Activated naive CD4-positive, alpha-beta T cell treated with anti-CD3 and anti-CD28 coated beads for 36 hours (primary cell): ENCODE measurements at regions of chr20 and their contacts with region 1.

Region 1: GRCh38 chr20:44885392-44886265 is at the start of gene YWHAB:
- DNase-seq: peak; percentile 99
- H3K4me3 Mint-ChIP-seq: peak within 1 kb of the TSS; percentile 95
- H3K27ac Mint-ChIP-seq: peak within 1 kb of the TSS; percentile 96
- H3K4me1 Mint-ChIP-seq: peaks cover 59% of the 10 kb centered on the region
- H3K27me3 Mint-ChIP-seq: no peaks in the 10 kb centered on the region
- total RNA-seq, gene YWHAB: 245 to 260 TPM

Region 2: GRCh38 chr20:44210422-44211176 is 675.0 kb before region 1 on chr20 and contains the start of gene OSER1:
- CTCF ChIA-PET with region 1: no interaction called
- intact Hi-C with region 1: loop called (anchors 5 kb)
- DNase-seq: peak; percentile 99
- H3K4me3 Mint-ChIP-seq: peak within 1 kb of the TSS; percentile 94
- H3K27ac Mint-ChIP-seq: peak within 1 kb of the TSS; percentile 92
- H3K4me1 Mint-ChIP-seq: peaks cover 61% of the 10 kb centered on the region
- H3K27me3 Mint-ChIP-seq: no peaks in the 10 kb centered on the region
- total RNA-seq, gene OSER1: 27.7 to 28.4 TPM

Region 3: DNA sequence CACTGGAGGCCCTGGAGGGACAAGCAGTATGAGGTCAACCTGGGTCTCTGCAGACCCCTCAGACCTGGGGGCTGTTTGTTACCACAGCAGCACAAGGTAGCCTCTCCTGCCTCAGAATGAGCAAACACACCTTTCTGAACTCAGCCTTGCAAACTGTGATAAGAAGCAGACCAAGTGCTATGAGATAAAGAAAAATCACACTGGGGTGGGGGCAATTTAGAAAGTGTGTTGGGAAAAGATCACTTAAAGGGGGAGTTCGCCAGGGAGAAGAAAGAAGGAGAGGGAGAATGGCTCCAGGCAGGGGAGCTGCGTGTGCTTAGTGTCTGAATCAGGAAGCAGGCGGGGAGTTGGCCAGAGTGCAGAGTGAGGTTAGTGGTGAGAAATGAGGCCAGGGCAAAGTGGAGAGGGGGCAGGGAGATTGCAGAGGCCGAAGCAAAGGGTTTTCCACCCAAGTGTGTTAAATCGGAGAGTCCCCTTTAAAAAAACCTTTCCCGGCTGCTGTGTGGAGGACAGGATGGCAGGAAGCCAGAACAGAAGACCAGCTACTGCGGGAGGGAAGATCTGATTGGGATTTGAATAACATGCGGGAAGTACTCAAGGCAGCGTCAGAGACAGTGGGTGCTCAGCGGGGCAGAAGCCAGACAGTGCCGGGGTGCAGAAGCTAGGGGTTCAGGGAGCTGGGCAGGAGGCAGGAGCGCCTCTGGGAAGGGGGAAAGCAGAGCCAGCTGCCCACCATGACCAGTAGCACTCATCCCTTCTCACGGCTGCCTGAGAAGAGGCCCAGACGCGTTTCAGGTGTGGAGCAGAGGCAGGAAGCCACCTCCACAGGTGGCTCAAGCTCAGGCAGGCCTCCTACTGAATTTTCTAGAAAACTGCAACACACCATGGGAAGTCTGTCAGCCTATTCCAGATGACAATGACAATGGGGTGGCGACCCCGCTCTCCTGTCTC is 243.2 kb before region 1 on chr20:
- CTCF ChIA-PET with region 1: no interaction called
- intact Hi-C with region 1: loop called (anchors 5 kb)
- DNase-seq: peak; percentile 52
- H3K4me3 Mint-ChIP-seq: peak overlapping the region; percentile 19
- H3K27ac Mint-ChIP-seq: peak overlapping the region; percentile 57
- H3K4me1 Mint-ChIP-seq: peaks cover 60% of the 10 kb centered on the region
- H3K27me3 Mint-ChIP-seq: no peaks in the 10 kb centered on the region

Region 4: DNA sequence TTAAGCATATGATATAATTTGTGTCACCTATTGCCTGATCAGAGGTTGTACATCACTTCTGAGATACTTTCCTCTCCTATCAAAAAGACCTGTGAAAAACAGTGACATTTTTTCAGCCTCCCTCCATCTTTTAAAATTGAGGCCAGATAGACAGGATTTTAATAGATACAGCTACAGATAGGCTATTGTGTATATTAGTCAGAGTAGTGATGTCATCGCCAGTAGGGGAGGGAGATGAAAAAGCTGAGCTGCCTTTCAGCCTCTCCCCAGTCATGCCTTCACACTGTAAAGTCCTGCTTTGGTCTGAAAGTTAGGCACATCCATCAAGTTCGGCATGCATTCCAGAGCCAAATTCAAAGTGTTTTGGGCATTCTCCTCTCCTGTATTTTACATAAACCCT is 16.3 kb after region 1 on chr20:
- CTCF ChIA-PET with region 1: interaction called, 4 read pairs
- intact Hi-C with region 1: loop called (anchors 1 kb)
- DNase-seq: peak; percentile 16
- H3K4me3 Mint-ChIP-seq: no peak overlapping the region
- H3K27ac Mint-ChIP-seq: no peak overlapping the region
- H3K4me1 Mint-ChIP-seq: peaks cover 45% of the 10 kb centered on the region
- H3K27me3 Mint-ChIP-seq: no peaks in the 10 kb centered on the region

Region 5: DNA sequence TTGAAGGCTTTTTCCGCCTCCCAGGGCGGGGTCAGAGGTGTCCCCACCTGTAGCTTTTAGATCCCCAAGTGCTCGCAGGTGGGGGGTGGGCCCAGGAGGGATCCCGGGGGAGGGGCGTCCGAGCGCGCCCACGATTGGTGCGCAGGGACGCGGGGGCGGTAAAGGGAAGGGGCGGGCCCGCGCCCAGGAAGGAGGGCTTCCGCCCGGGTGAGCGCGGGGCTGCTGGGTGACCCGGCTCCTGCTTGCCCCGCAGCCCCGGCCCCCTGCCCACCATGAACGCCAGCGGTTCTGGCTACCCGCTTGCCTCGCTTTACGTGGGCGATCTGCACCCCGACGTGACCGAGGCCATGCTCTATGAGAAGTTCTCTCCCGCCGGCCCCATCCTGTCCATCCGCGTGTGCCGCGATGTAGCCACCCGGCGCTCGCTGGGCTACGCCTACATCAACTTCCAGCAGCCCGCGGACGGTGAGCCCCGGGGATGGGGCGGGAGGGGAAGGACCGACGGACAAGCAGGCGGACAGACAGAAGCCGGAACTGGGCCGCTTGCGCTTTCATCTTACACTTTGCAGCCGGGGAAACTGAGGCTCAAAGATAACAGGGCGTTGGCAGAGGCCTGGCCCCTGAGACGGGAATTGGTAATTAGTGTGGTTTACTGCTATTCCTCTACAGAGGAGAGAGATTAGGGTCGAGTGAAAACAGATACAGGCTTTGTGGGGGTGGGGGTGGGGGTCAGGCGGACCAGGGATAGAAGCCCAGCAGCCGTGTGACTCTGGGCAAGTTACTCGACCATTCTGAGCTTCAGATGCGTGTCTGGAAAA is 24.5 kb after region 1 on chr20 and contains the start of gene PABPC1L:
- CTCF ChIA-PET with region 1: interaction called, 4 read pairs
- intact Hi-C with region 1: loop called (anchors 1 kb)
- DNase-seq: peak; percentile 81
- H3K4me3 Mint-ChIP-seq: peak within 1 kb of the TSS; percentile 88
- H3K27ac Mint-ChIP-seq: peak within 1 kb of the TSS; percentile 66
- H3K4me1 Mint-ChIP-seq: peaks cover 35% of the 10 kb centered on the region
- H3K27me3 Mint-ChIP-seq: no peaks in the 10 kb centered on the region
- total RNA-seq, gene PABPC1L: 71.0 to 72.8 TPM

Region 6: GRCh38 chr20:44960103-44960852 is 74.6 kb after region 1 on chr20 and contains the start of gene TOMM34:
- CTCF ChIA-PET with region 1: no interaction called
- intact Hi-C with region 1: loop called (anchors 1 kb)
- DNase-seq: peak; percentile 96
- H3K4me3 Mint-ChIP-seq: peak within 1 kb of the TSS; percentile 93
- H3K27ac Mint-ChIP-seq: peak within 1 kb of the TSS; percentile 97
- H3K4me1 Mint-ChIP-seq: peaks cover 64% of the 10 kb centered on the region
- H3K27me3 Mint-ChIP-seq: no peaks in the 10 kb centered on the region
- total RNA-seq, gene TOMM34: 44.0 to 45.9 TPM

Region 7: GRCh38 chr20:45157962-45158361 is 272.3 kb after region 1 on chr20:
- CTCF ChIA-PET with region 1: no interaction called
- intact Hi-C with region 1: no loop called
- DNase-seq: no peak
- H3K4me3 Mint-ChIP-seq: no peak overlapping the region
- H3K27ac Mint-ChIP-seq: no peak overlapping the region
- H3K4me1 Mint-ChIP-seq: no peaks in the 10 kb centered on the region
- H3K27me3 Mint-ChIP-seq: peaks cover 28% of the 10 kb centered on the region